ENCODE measurements at regions of chr10 and their contacts with region 1.

Region 1: GRCh38 chr10:13160934-13161856 is at the start of gene MCM10:
- DNase-seq: peak; percentile 96
- H3K4me3 ChIP-seq: peak within 1 kb of the TSS; percentile 69
- H3K27me3 ChIP-seq: no peaks in the 10 kb centered on the region
- CTCF ChIP-seq: peak; percentile 81
- polyA plus RNA-seq, gene MCM10: 2.3 and 3.3 TPM in 2 replicates

Region 2: DNA sequence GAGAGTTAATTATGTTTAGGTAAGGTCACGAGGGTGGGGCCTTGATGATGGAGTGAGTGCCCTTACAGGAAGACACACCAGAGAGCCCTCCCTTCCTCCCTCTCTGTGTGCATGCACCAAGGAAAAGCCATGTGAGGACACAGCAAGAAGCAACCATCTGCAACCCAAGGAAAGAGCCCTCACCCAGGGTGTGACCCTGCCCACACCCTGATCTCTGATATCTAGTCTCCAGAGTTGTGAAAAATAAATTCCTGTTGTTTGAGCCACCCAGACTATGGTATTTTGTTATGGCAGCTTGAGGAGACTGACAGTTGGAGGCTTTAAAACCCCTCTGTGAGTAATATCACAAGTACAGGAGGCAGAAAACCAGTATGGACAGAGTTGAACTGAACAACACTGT is 14.8 kb before region 1 on chr10:
- CTCF ChIA-PET with region 1: interaction called, 12 read pairs
- POLR2A ChIA-PET with region 1: no interaction called
- DNase-seq: no peak
- H3K4me3 ChIP-seq: no peak overlapping the region
- H3K27me3 ChIP-seq: no peaks in the 10 kb centered on the region
- CTCF ChIP-seq: no peak

Region 3: DNA sequence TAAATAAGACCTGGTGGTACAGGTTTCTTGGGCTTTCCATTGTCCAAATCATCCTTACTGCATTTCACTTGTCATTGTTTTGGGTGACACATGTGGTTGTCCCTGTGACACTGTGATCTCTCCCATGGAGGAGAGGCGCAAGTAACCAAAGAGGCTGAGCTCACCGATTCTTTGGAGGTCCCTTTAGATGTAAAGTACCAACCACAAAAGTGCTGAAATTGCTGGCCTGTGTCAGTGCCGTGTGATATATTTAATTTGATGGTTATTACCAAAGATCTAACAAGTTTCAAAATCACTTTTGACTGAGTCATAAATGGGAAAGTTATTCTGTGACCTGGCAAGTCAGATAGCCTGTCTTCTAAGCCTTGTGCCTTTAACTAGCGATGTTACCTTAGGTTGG is 19.6 kb after region 1 on chr10:
- CTCF ChIA-PET with region 1: interaction called, 13 read pairs
- POLR2A ChIA-PET with region 1: no interaction called
- DNase-seq: no peak
- H3K4me3 ChIP-seq: no peak overlapping the region
- H3K27me3 ChIP-seq: no peaks in the 10 kb centered on the region
- CTCF ChIP-seq: no peak

Region 4: DNA sequence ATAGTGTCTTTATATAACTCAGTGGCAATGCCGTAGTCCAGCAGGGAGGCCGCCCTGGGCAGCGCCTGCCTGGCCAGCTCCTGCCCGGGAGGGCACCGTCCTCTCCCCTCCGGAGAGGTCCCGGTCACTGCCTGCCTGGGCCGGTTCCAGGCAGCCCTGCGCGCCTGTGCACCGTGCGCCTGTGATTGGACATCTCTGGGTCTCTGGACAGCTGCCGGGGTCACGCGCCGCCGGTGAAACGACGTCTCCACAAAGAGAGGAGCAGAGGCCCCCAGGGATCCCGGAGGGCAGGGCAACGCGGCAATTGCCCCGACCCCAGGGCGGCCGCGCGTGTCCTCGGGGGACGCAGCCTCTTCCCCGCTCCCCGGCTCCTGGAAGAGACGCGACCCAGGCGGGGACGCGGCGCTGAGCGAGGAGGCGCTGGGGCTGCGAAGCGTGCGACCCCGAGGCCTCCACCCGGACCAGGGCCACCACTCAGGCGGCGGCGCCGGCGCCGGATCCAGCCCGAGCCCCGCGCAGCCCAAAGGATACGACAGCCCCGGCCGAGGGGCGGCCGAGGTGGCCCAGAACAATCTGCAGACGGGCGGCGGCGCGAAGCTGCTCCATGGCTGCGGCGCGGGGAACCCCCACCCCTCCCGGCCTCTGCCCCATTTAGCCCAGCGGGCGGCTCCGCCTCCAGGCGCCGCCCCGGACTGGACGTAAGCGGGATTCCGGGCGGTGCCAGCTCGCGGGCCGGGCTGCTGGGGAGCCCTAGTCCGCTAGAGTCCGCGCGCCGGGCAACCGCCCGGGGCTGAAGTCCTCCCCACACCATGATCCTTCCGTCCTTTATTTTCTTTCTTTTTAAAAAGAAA is 138.5 kb after region 1 on chr10 and contains the start of gene PHYH:
- CTCF ChIA-PET with region 1: interaction called, 29 read pairs
- POLR2A ChIA-PET with region 1: no interaction called
- DNase-seq: no peak
- H3K4me3 ChIP-seq: peak within 1 kb of the TSS; percentile 65
- H3K27me3 ChIP-seq: no peaks in the 10 kb centered on the region
- CTCF ChIP-seq: no peak
- polyA plus RNA-seq, gene PHYH: 7.1 and 11.0 TPM in 2 replicates